KBM-7 (cell line): ENCODE measurements at regions of chr2 and their contacts with region 1.

Region 1: GRCh38 chr2:40554668-40555285 is 102.9 kb upstream of the SLC8A1 start:
- DNase-seq: peak; percentile 76

Region 2: GRCh38 chr2:39913648-39914461 is 640.9 kb before region 1 on chr2:
- in situ Hi-C with region 1: loop called (anchors 25 kb)
- DNase-seq: peak; percentile 81